ENCODE measurements at regions of chr7 and their contacts with region 1.

Region 1: GRCh38 chr7:138449580-138449979 is 10.5 kb upstream of the TRIM24 start:
- DNase-seq: peak in 3 of 4 experiments; percentile 34 to 72 (median 71)
- ATAC-seq: peak; percentile 94
- H3K4me3 ChIP-seq: no peak overlapping the region
- H3K27ac ChIP-seq: no peak overlapping the region
- H3K4me1 ChIP-seq: peaks cover 0 to 6% of the 10 kb centered on the region in 2 experiments; a peak in 2 of 5 replicates
- H3K27me3 ChIP-seq: no peaks in the 10 kb centered on the region; a peak in 1 of 5 replicates
- CTCF ChIP-seq: peak; percentile 64 to 80 (median 73)
- EP300 ChIP-seq: no peak
- POLR2A ChIP-seq: no peak
- RAD21 ChIP-seq: peak; percentile 20 to 63; a peak in 3 of 4 replicates

Region 2: DNA sequence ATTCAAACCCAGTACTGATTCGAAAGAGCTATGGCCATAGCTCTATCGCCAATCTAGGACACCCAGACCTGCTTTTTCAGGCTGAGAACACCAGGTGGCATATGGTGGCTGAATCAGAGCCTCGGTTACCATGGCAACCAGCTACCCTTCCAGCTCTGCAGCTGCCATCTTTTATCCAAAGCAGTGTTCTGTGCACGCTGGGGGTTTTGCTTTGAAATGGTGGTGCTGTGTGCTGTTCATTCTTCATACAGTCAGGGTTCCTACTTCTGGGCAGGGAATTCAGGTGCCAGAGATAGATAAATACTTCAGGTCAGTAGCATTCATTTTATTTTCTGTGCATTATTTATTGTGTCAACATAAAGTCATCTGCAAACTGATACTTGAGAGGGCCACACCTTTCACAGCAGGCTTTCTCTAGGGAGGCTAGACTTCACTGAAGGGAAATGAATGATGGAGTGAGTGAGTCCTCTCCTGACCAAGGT is 287.9 kb before region 1 on chr7:
- CTCF ChIA-PET with region 1: no interaction called
- POLR2A ChIA-PET with region 1: no interaction called
- in situ Hi-C with region 1: no loop called
- intact Hi-C with region 1: loop called (anchors 1 kb)
- DNase-seq: peak; percentile 94 to 98 (median 96)
- ATAC-seq: peak; percentile 100
- H3K4me3 ChIP-seq: no peak overlapping the region
- H3K27ac ChIP-seq: no peak overlapping the region
- H3K4me1 ChIP-seq: no peaks in the 10 kb centered on the region
- H3K27me3 ChIP-seq: no peaks in the 10 kb centered on the region
- CTCF ChIP-seq: peak; percentile 83 to 96 (median 91)
- EP300 ChIP-seq: 0 out of 2 replicates have a peak, but pooled peaks have one; percentile 7
- POLR2A ChIP-seq: no peak
- RAD21 ChIP-seq: peak; percentile 96 to 97

Region 3: GRCh38 chr7:138645290-138645689 is 195.7 kb after region 1 on chr7:
- CTCF ChIA-PET with region 1: no interaction called
- POLR2A ChIA-PET with region 1: no interaction called
- in situ Hi-C with region 1: no loop called
- intact Hi-C with region 1: loop called (anchors 1 kb)
- DNase-seq: peak in 2 of 4 experiments; percentile 30 to 49
- ATAC-seq: peak; percentile 69
- H3K4me3 ChIP-seq: no peak overlapping the region
- H3K27ac ChIP-seq: no peak overlapping the region
- H3K4me1 ChIP-seq: no peaks in the 10 kb centered on the region
- H3K27me3 ChIP-seq: peaks cover 4 to 32% of the 10 kb centered on the region in 2 experiments; a peak in 3 of 5 replicates
- CTCF ChIP-seq: peak; percentile 44 to 58 (median 57)
- EP300 ChIP-seq: no peak
- POLR2A ChIP-seq: no peak
- RAD21 ChIP-seq: peak; percentile 17 to 58; a peak in 3 of 4 replicates

Region 4: DNA sequence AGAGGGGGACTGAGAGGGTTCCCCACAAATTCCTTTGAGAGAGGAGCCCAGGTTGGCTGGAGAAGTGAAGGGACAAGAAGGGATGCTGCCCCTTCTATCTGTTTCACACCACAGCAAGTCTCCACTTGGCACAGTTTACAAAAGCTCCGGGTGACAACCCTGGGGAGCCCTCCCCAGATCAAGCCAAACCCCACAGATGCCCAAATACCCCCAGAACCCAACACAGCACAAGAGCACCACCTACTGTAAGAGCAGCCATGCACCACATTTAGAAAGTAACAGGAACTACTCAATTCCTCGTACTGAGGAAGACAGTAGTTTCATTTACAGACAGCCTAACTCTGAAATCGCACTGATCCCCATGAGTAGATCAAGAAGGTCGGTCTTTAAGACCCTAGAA is 416.3 kb after region 1 on chr7:
- CTCF ChIA-PET with region 1: no interaction called
- POLR2A ChIA-PET with region 1: no interaction called
- in situ Hi-C with region 1: no loop called
- intact Hi-C with region 1: loop called (anchors 2 kb)
- DNase-seq: peak; percentile 40 to 59 (median 43)
- ATAC-seq: peak; percentile 77
- H3K4me3 ChIP-seq: no peak overlapping the region
- H3K27ac ChIP-seq: no peak overlapping the region
- H3K4me1 ChIP-seq: peaks cover 3 to 14% of the 10 kb centered on the region in 2 experiments; a peak in 4 of 5 replicates
- H3K27me3 ChIP-seq: peaks cover 42 to 70% of the 10 kb centered on the region in 2 experiments
- CTCF ChIP-seq: peak; percentile 74 to 89 (median 75)
- EP300 ChIP-seq: no peak
- POLR2A ChIP-seq: no peak
- RAD21 ChIP-seq: peak; percentile 71 to 82